H1 (cell line): ENCODE measurements at regions of chr14 and their contacts with region 1.

Region 1: DNA sequence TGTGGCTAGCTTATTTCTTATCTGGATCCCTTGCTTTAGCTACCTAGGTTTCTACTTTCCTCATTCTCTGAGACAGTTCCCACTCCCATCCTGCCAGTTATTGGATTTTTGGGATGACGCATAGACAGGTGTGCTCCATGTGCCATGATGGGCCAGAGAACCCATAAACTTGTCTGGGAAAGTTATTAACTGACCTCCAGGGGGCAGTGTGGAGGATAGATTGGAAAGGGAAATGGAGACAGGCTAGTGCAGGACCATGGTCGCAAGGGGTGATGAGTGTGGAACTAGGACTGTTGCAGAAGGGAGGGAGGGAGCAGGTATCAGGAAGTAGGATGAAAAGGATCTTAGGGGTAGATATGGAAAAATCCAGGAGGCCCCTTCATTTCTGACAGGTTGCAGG is 80.3 kb downstream of the ESRRB start:
- DNase-seq: peak in 1 of 2 experiments; percentile 81
- H3K4me3 ChIP-seq: no peak overlapping the region
- H3K27ac ChIP-seq: no peak overlapping the region
- H3K4me1 ChIP-seq: no peaks in the 10 kb centered on the region; a peak in 1 of 7 replicates
- H3K27me3 ChIP-seq: no peaks in the 10 kb centered on the region
- CTCF ChIP-seq: peak; percentile 51 to 73 (median 58)
- EP300 ChIP-seq: no peak
- POLR2A ChIP-seq: no peak
- RAD21 ChIP-seq: peak; percentile 40 to 62

Region 2: GRCh38 chr14:76337635-76338545 is 118.3 kb before region 1 on chr14:
- CTCF ChIA-PET with region 1: no interaction called
- POLR2A ChIA-PET with region 1: no interaction called
- DNase-seq: no peak
- H3K4me3 ChIP-seq: no peak overlapping the region
- H3K27ac ChIP-seq: no peak overlapping the region
- H3K4me1 ChIP-seq: peaks cover 0 to 14% (median 2%) of the 10 kb centered on the region in 4 experiments; a peak in 4 of 7 replicates
- H3K27me3 ChIP-seq: no peaks in the 10 kb centered on the region; a peak in 1 of 7 replicates
- CTCF ChIP-seq: no peak
- EP300 ChIP-seq: no peak
- POLR2A ChIP-seq: no peak
- RAD21 ChIP-seq: no peak

Region 3: DNA sequence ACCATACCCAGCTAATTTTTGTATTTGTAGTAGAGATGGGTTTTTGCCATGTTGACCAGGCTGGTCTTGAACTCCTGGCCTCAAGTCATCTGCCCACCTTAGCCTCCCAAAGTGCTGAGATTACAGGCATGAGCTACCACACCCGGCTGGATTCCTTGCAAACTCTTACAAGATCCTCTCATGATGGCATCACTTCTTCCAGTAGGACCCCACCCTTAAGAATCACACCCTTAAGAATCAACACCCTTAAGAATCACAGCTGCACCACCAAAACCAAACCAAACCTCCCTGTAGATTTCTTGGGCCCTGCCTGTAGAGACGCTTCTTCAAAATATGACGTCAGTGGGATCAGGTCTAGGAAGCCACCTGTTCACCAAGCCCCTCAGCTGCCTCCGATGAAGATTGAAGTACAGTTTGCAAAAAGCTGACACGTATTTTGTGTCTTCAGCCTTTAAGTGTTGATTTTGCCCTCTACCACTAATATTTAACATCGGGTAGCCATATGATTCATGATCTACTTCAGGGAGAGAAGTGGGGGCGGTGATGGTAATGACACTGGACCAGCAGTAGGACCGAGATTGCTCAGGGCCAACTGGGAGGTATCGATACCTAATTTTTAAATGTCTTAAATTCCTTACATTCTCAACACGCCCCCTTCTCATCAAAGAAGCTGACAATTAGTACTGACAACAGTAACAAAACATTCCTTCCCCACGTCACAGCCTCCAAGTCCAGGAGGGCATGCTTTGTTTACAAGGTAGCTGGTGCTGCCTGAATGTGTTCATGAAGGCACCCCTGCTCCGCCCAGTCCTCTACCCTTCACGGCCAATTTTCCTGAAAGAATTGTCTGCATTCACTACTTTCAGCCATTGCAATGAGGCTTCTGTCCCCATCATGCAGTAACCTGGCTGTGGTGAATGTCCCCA is 23.1 kb before region 1 on chr14:
- CTCF ChIA-PET with region 1: interaction called, 19 read pairs
- POLR2A ChIA-PET with region 1: no interaction called
- DNase-seq: no peak
- H3K4me3 ChIP-seq: no peak overlapping the region
- H3K27ac ChIP-seq: no peak overlapping the region
- H3K4me1 ChIP-seq: peaks cover 0 to 3% (median 2%) of the 10 kb centered on the region in 4 experiments; a peak in 4 of 7 replicates
- H3K27me3 ChIP-seq: no peaks in the 10 kb centered on the region
- CTCF ChIP-seq: no peak
- EP300 ChIP-seq: no peak
- POLR2A ChIP-seq: no peak
- RAD21 ChIP-seq: no peak

Region 4: DNA sequence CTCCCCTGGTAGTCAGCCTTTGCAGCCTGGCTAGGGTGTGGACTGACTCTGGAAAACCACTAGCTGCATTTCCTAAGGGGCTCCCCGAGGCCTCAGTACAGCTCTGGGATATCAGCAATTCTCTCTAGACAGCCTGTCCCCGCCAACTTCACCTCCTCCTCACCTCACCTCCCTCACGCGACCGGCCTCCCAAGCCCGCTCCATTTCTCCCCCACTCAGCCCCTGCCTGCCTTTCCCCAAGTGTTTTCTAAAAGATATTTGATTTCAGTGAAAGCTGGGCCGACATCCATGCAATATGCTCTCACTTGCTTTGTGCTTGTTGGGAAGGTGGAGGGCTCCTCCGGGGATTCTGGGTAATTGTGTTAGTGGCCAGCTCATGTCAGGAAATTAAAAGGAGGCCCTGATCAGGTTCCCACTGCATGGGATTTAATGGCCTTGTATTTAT is 11.5 kb after region 1 on chr14:
- CTCF ChIA-PET with region 1: interaction called, 45 read pairs
- POLR2A ChIA-PET with region 1: interaction called, 5 read pairs
- DNase-seq: no peak
- H3K4me3 ChIP-seq: no peak overlapping the region
- H3K27ac ChIP-seq: no peak overlapping the region
- H3K4me1 ChIP-seq: peaks cover 0 to 7% (median 3%) of the 10 kb centered on the region in 4 experiments; a peak in 3 of 7 replicates
- H3K27me3 ChIP-seq: no peaks in the 10 kb centered on the region
- CTCF ChIP-seq: no peak
- EP300 ChIP-seq: no peak
- POLR2A ChIP-seq: no peak
- RAD21 ChIP-seq: no peak

Region 5: DNA sequence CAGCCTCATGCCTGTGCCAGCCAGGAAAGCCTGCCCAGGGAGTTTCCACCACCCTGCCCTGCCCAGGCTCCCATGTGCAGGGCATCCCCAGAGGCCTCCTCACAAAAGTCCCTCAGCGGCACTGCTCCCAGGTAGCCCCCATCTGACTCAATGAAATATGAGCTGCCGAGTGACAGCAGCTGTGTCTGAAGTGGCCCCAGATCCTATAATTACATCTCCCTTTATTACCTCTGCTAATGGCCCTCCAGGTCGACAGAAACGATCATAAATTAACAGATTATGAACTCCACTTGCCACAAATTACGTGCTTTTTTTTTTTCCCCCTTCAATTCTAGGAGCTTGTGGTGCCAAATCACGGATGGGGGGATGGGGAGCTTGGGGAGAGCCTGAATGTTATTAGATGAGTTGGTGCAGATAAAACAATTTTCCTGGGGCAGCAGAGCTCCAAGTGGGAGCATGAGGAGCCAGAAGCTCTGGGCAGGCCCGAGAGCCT is 30.1 kb after region 1 on chr14:
- CTCF ChIA-PET with region 1: interaction called, 33 read pairs
- POLR2A ChIA-PET with region 1: no interaction called
- DNase-seq: no peak
- H3K4me3 ChIP-seq: no peak overlapping the region
- H3K27ac ChIP-seq: no peak overlapping the region
- H3K4me1 ChIP-seq: peaks cover 0 to 4% (median 3%) of the 10 kb centered on the region in 4 experiments; a peak in 3 of 7 replicates
- H3K27me3 ChIP-seq: no peaks in the 10 kb centered on the region
- CTCF ChIP-seq: no peak
- EP300 ChIP-seq: no peak
- POLR2A ChIP-seq: no peak
- RAD21 ChIP-seq: no peak

Region 6: GRCh38 chr14:76581592-76581991 is 125.4 kb after region 1 on chr14:
- CTCF ChIA-PET with region 1: no interaction called
- POLR2A ChIA-PET with region 1: no interaction called
- DNase-seq: no peak
- H3K4me3 ChIP-seq: no peak overlapping the region
- H3K27ac ChIP-seq: no peak overlapping the region
- H3K4me1 ChIP-seq: no peaks in the 10 kb centered on the region
- H3K27me3 ChIP-seq: no peaks in the 10 kb centered on the region
- CTCF ChIP-seq: no peak
- EP300 ChIP-seq: no peak
- POLR2A ChIP-seq: no peak
- RAD21 ChIP-seq: no peak

Region 7: DNA sequence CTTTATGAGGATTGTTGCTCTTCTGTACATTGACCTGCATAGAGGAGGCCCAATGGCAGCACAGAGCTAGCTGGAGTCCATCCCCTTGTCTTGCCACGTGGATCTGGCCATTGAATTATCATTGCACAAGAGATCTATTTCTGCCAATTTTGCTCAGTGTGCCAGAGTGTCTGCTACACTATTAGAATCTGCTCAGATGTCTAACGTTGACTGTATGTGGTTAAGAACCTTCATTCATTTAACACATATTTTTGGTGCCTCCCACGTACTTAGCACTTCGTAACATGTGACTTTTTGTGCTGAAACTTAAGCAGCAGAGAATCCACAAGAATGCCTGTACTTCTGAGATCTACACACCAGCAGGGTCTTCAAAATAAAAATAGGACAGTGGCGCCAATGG is 139.1 kb after region 1 on chr14:
- CTCF ChIA-PET with region 1: no interaction called
- POLR2A ChIA-PET with region 1: no interaction called
- DNase-seq: no peak
- H3K4me3 ChIP-seq: no peak overlapping the region
- H3K27ac ChIP-seq: no peak overlapping the region
- H3K4me1 ChIP-seq: peaks cover 0 to 11% (median 6%) of the 10 kb centered on the region in 4 experiments; a peak in 6 of 7 replicates
- H3K27me3 ChIP-seq: no peaks in the 10 kb centered on the region
- CTCF ChIP-seq: no peak
- EP300 ChIP-seq: no peak
- POLR2A ChIP-seq: no peak
- RAD21 ChIP-seq: no peak

Region 8: DNA sequence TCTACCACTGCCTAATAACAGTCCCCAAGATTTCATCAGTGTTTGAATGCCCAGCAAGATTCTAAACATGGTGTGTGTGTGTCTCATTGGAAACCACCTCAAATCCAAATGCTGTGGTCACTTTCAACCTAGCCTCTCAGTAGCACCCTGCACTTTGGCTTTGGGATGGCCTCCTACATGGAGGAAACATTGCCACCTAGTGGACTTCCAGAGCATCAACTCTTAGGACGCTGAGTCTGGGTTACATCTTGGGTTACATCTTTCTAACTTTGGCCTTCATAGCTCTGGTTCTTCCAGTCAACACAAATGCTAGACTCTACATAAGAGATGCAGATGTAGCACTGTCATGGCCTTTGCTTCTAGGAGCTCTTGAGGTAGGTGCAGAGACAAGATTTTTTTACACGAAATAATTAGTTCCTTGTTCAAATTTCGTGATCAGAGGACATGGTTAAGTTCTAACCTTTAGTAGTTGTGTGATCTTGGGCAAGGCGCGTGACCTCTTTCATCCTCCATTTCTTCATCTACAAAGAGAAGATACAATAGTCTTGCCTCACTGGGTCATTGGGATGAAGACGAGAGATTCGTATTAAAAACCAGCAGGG is 191.6 kb after region 1 on chr14:
- CTCF ChIA-PET with region 1: interaction called, 32 read pairs
- POLR2A ChIA-PET with region 1: no interaction called
- DNase-seq: no peak
- H3K4me3 ChIP-seq: no peak overlapping the region
- H3K27ac ChIP-seq: no peak overlapping the region
- H3K4me1 ChIP-seq: peaks cover 0 to 4% (median 1%) of the 10 kb centered on the region in 4 experiments; a peak in 2 of 7 replicates
- H3K27me3 ChIP-seq: no peaks in the 10 kb centered on the region
- CTCF ChIP-seq: peak; percentile 48 to 98 (median 79)
- EP300 ChIP-seq: no peak
- POLR2A ChIP-seq: no peak
- RAD21 ChIP-seq: peak; percentile 77 to 89